Activated CD4-positive, alpha-beta T cell treated with anti-CD3 and anti-CD28 coated beads for 36 hours (primary cell): ENCODE measurements at regions of chr4 and their contacts with region 1.

Region 1: DNA sequence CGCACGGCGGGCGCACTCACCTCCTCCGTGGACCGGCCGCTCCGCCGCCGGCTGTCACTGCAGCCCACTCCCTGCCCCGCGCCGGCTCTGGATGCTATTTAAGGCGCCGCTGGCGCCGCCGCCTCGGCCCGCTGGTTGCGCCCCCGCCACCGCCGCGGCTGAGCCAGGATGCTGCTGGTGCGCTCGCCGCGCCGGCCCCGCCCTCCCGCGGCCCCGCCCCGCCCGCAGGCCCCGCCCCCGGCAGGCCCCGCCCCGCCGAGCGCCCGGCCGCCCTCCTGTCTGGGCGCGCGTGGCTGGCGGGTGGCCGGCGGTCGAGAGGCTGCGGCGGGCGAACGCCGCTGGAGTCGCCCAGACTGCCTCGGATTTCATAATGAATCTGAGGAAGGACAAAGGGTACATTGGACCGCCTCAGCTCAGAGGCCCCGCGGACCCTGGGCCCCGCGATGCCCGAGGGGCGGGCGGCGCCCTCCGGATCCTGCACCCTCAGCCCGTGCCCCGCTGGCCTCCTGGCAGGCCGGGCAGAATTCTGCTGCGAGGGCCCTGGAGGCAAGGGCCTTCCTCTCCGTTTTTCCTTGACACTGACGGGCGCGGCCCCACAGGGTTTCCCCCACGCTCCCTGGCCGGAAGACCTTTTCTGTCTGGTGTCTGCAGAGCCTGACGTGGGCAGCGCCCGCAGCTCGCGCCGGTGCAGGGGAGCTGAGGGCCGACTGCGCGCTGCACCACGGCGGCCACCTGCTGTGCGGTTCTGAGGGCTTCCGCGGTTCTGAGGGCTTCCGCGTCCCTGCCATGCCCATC is at the start of gene ACSL1:
- DNase-seq: peak; percentile 88
- ATAC-seq: peak; percentile 82
- H3K4me3 Mint-ChIP-seq: peak within 1 kb of the TSS; percentile 87
- H3K27ac Mint-ChIP-seq: peak within 1 kb of the TSS; percentile 89
- H3K4me1 Mint-ChIP-seq: peaks cover 34% of the 10 kb centered on the region
- H3K27me3 Mint-ChIP-seq: no peaks in the 10 kb centered on the region
- total RNA-seq, gene ACSL1: 17.1 to 17.2 TPM

Region 2: GRCh38 chr4:184649026-184649970 is 176.8 kb before region 1 on chr4 and contains the starts of genes CASP3 and PRIMPOL:
- CTCF ChIA-PET with region 1: no interaction called
- POLR2A ChIA-PET with region 1: no interaction called
- intact Hi-C with region 1: loop called (anchors 1 to 5 kb)
- DNase-seq: peak; percentile 98
- ATAC-seq: peak; percentile 88
- H3K4me3 Mint-ChIP-seq: peak within 1 kb of the TSS; percentile 94
- H3K27ac Mint-ChIP-seq: peak within 1 kb of the TSS; percentile 95
- H3K4me1 Mint-ChIP-seq: peaks cover 51% of the 10 kb centered on the region
- H3K27me3 Mint-ChIP-seq: no peaks in the 10 kb centered on the region
- total RNA-seq, gene CASP3: 44.3 to 65.7 TPM
- total RNA-seq, gene PRIMPOL: 20.4 to 24.3 TPM

Region 3: DNA sequence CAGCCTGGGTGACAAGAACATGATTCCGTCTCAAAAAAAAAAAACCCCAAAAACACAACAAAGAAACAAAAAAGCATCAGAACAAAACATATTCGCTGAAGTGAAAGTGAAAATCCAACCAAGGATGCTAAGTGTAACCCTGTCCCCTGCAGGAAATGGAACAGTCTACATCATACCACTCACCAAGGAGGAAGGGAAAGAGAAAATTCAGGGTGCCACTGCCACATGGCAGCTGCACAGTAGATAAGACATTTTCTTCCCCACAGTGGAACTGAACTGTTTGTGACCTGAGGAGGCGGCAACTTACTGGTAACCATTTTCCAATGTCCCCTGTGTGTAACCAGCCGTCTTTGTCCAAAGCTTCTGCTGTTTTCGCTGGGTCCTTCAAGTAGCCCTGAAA is 64.0 kb before region 1 on chr4:
- CTCF ChIA-PET with region 1: interaction called, 3 read pairs
- POLR2A ChIA-PET with region 1: no interaction called
- intact Hi-C with region 1: loop called in 1 of 2 experiments (anchors 1 kb)
- DNase-seq: peak; percentile 55
- ATAC-seq: peak; percentile 99
- H3K4me3 Mint-ChIP-seq: peak overlapping the region; percentile 20
- H3K27ac Mint-ChIP-seq: peak overlapping the region; percentile 89
- H3K4me1 Mint-ChIP-seq: peaks cover 22% of the 10 kb centered on the region
- H3K27me3 Mint-ChIP-seq: no peaks in the 10 kb centered on the region

Region 4: DNA sequence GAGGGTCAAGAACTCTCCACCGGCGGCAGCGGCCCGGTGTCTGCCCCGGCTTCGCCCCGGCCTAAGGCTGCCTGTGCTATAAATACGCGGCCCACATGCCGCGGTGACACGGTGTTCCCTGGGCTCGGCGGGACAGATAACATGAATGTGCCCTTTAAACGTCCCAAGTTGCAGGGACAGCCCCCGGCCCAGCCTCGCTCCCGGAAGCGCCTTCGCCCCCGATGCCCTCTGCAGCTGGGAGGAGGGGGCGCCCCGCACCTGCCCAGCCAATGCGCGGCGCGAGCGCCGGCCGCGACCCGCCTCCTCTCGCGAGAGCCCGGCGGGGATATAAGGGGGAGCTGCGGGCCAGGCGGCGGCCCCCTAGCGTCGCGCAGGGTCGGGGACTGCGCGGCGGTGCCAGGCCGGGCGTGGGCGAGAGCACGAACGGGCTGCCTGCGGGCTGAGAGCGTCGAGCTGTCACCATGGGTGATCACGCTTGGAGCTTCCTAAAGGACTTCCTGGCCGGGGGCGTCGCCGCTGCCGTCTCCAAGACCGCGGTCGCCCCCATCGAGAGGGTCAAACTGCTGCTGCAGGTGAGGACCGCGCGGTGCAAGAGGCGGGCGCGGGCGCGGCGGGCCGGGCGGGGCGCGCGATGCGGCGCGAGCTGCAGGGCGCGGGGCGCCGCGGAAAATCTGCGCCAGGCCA is 317.0 kb after region 1 on chr4 and contains the start of gene SLC25A4:
- CTCF ChIA-PET with region 1: no interaction called
- POLR2A ChIA-PET with region 1: no interaction called
- intact Hi-C with region 1: loop called in 1 of 2 experiments (anchors 1 kb)
- DNase-seq: peak; percentile 91
- ATAC-seq: peak; percentile 95
- H3K4me3 Mint-ChIP-seq: peak within 1 kb of the TSS; percentile 74
- H3K27ac Mint-ChIP-seq: peak within 1 kb of the TSS; percentile 70
- H3K4me1 Mint-ChIP-seq: peaks cover 10% of the 10 kb centered on the region
- H3K27me3 Mint-ChIP-seq: peaks cover 33% of the 10 kb centered on the region
- total RNA-seq, gene SLC25A4: 4.2 to 5.0 TPM

Region 5: GRCh38 chr4:185425647-185426352 is 599.7 kb after region 1 on chr4 and contains the start of gene UFSP2:
- CTCF ChIA-PET with region 1: no interaction called
- POLR2A ChIA-PET with region 1: no interaction called
- intact Hi-C with region 1: loop called in 1 of 2 experiments (anchors 1 kb)
- DNase-seq: peak; percentile 93
- ATAC-seq: peak; percentile 91
- H3K4me3 Mint-ChIP-seq: peak within 1 kb of the TSS; percentile 83
- H3K27ac Mint-ChIP-seq: peak within 1 kb of the TSS; percentile 90
- H3K4me1 Mint-ChIP-seq: peaks cover 30% of the 10 kb centered on the region
- H3K27me3 Mint-ChIP-seq: peaks cover 2% of the 10 kb centered on the region
- total RNA-seq, gene UFSP2: 27.3 to 40.3 TPM